MCF 10A (cell line): ENCODE measurements at regions of chr14 and their contacts with region 1.

Region 1: DNA sequence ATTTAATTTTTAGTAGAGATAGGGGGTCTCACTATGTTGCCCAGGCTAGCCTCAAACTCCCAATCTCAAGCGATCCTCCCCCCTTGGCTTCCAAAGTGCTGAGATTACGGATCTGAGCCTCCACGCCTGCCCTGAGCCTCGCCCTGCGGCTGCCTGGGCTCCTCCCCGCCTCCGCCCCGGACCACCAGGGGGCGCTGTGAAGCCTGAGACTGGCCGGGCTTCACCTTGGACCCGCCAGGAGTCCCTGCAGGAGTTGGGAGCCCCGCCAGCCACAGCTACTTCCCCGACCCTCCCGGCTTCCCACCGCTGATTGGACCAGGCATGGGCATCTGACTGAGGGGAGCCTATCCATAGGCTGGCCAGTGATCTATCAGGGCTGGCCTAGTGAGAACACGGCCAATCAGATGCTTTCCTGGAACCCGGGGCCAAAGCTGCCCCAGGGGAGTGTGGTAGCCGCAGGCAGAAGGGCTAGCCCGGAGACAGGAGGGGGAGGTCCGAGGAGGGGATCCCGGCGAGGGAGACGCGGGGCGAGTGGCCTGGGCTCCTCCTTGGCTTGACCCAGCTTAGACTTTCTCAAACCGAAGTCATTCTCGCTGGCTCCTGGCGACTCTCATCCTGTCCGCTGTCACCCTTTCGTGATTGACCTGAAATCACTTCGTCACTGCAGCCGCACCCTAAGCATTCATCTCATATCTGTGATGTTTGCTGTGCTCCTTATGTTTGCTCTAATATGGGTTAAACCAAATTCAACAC is 15.1 kb upstream of the ANKRD9 start:
- DNase-seq: peak; percentile 99
- H3K4me3 Mint-ChIP-seq: peak overlapping the region; percentile 95
- H3K27ac Mint-ChIP-seq: peak overlapping the region; percentile 97
- H3K4me1 Mint-ChIP-seq: peaks cover 25% of the 10 kb centered on the region
- H3K27me3 Mint-ChIP-seq: no peaks in the 10 kb centered on the region
- CTCF ChIP-seq: peak; percentile 92

Region 2: GRCh38 chr14:101823511-101824120 is 701.0 kb before region 1 on chr14:
- CTCF ChIA-PET with region 1: no interaction called
- POLR2A ChIA-PET with region 1: no interaction called
- intact Hi-C with region 1: no loop called
- DNase-seq: no peak
- H3K4me3 Mint-ChIP-seq: no peak overlapping the region
- H3K27ac Mint-ChIP-seq: no peak overlapping the region
- H3K4me1 Mint-ChIP-seq: peaks cover 8% of the 10 kb centered on the region
- H3K27me3 Mint-ChIP-seq: no peaks in the 10 kb centered on the region
- CTCF ChIP-seq: no peak

Region 3: DNA sequence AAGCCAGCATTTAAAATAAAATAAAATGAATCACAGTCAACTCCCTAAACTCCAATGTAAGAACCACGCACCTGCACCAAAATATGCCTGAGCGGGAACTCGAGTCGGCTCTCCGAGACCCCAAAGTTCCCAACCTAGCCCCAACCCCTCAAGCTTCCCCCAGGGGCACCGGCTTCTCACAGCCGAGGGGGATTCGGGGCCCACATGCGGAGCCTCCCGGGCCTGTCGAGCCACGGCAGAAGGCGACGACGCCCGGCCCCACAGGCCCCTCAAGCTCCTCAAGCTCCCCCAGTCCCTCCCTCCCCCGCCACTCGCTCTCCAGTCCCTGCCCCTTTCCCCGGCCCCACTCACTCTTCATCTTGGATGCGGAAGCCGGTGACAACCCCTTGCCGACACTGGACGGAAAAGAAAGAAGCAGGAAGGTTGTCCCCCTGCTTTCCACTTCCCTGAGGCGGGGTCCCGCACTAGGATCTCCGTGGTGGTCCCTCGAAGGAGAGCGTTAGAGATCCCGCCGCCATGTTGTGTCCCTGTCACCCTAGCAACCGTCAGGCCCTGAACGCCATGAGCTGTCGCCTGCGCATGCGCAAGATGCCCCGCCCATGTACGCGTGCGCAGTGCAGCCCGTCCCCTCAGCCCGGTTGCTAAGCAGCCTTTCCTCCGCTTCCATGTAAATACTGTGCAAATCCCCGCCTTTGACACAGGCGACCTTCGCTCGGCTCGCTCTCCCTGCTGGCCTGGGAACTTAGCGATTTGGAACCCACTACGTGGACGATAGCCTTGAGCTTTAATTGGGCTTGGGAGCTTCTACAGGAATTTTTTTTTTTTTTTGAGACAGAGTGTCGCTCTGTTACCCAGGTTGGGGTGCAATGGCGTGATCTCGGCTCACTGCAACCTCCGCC is 219.8 kb before region 1 on chr14 and contains the start of gene MOK:
- CTCF ChIA-PET with region 1: no interaction called
- POLR2A ChIA-PET with region 1: no interaction called
- intact Hi-C with region 1: no loop called
- DNase-seq: peak; percentile 96
- H3K4me3 Mint-ChIP-seq: peak within 1 kb of the TSS; percentile 87
- H3K27ac Mint-ChIP-seq: peak within 1 kb of the TSS; percentile 99
- H3K4me1 Mint-ChIP-seq: peaks cover 7% of the 10 kb centered on the region
- H3K27me3 Mint-ChIP-seq: no peaks in the 10 kb centered on the region
- CTCF ChIP-seq: no peak
- total RNA-seq, gene MOK: 61.7 and 98.9 TPM in 2 replicates

Region 4: DNA sequence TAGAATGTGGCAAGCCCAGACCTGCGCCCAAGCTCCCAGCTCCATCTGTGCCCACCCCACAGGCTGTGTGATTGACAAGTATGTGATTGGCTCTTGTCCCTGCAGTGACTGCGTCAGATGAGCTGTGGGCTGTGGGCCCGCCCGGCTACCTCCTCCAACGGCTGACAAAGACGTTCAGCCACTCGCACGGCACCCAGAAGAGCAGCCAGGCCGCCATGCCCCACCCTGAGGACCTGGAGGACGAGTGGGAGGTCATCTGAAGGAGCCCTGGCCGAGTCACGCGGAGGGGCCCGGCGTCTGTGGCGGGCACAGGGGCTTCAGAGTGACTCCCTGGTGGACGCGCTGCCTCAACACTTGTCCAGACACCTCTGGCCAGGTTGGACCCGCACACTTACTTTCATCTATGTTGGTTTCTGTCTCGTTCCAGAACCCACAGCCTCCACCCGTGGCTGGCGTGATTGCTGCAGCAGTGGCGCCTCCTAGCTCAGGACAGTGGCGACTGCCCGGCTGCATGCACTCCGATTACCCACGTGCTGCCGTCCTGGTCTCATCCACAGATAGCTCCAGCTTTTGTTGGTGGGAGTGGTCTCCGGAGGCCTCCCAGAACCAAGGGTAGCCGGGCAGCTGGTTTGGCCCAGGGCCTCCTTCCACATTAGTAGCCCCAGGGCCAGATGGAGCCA is 26.5 kb before region 1 on chr14:
- CTCF ChIA-PET with region 1: no interaction called
- POLR2A ChIA-PET with region 1: no interaction called
- intact Hi-C with region 1: no loop called
- DNase-seq: no peak
- H3K4me3 Mint-ChIP-seq: no peak overlapping the region
- H3K27ac Mint-ChIP-seq: no peak overlapping the region
- H3K4me1 Mint-ChIP-seq: no peaks in the 10 kb centered on the region
- H3K27me3 Mint-ChIP-seq: no peaks in the 10 kb centered on the region
- CTCF ChIP-seq: no peak

Region 5: GRCh38 chr14:102539580-102540314 is 15.1 kb after region 1 on chr14:
- CTCF ChIA-PET with region 1: interaction called, 5 read pairs
- POLR2A ChIA-PET with region 1: interaction called, 13 read pairs
- intact Hi-C with region 1: no loop called
- DNase-seq: peak; percentile 89
- H3K4me3 Mint-ChIP-seq: no peak overlapping the region
- H3K27ac Mint-ChIP-seq: peak overlapping the region; percentile 35
- H3K4me1 Mint-ChIP-seq: peaks cover 17% of the 10 kb centered on the region
- H3K27me3 Mint-ChIP-seq: no peaks in the 10 kb centered on the region
- CTCF ChIP-seq: no peak

Region 6: DNA sequence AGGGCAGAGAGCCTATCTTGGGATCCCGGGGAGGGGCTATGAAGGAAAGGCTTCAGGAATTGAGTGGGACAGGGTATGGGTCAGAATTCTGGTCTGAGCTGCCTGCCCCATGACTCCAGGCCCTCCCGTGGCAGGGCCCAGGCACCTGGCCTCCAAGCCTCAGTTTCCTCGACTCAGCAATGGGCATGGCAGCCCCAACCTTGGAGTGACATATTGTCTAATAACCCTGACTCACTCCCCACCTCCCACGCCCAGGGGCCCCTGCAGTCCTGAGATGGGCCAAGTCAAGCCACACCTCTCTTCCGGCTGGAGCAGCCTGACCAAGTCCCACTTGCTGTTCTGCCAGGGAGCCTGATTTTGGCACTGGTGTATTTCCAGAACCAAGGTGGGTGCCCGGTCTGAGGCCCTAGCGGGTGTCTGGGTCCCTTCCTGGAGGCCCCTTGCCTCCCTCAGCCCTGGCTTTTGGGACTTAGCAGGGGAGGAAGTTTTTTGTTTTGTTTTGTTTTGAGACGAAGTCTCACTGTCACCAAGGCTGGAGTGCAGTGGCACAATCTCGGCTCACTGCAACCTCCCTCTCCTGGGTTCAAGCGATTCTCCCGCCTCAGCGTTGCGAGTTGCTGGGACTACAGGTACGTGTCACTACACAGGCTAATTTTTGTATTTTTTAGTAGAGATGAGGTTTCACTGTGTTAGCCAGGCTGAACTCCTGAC is 27.5 kb after region 1 on chr14:
- CTCF ChIA-PET with region 1: interaction called, 3 read pairs
- POLR2A ChIA-PET with region 1: interaction called, 16 read pairs
- intact Hi-C with region 1: loop called (anchors 1 kb)
- DNase-seq: peak; percentile 89
- H3K4me3 Mint-ChIP-seq: peak overlapping the region; percentile 69
- H3K27ac Mint-ChIP-seq: peak overlapping the region; percentile 95
- H3K4me1 Mint-ChIP-seq: peaks cover 6% of the 10 kb centered on the region
- H3K27me3 Mint-ChIP-seq: no peaks in the 10 kb centered on the region
- CTCF ChIP-seq: no peak

Region 7: GRCh38 chr14:102557434-102558226 is 33.0 kb after region 1 on chr14:
- CTCF ChIA-PET with region 1: interaction called, 6 read pairs
- POLR2A ChIA-PET with region 1: interaction called, 16 read pairs
- intact Hi-C with region 1: loop called (anchors 1 kb)
- DNase-seq: peak; percentile 69
- H3K4me3 Mint-ChIP-seq: no peak overlapping the region
- H3K27ac Mint-ChIP-seq: peak overlapping the region; percentile 70
- H3K4me1 Mint-ChIP-seq: peaks cover 8% of the 10 kb centered on the region
- H3K27me3 Mint-ChIP-seq: no peaks in the 10 kb centered on the region
- CTCF ChIP-seq: no peak

Region 8: GRCh38 chr14:102568114-102568621 is 43.5 kb after region 1 on chr14:
- CTCF ChIA-PET with region 1: interaction called, 6 read pairs
- POLR2A ChIA-PET with region 1: interaction called, 12 read pairs
- intact Hi-C with region 1: no loop called
- DNase-seq: peak; percentile 87
- H3K4me3 Mint-ChIP-seq: peak overlapping the region; percentile 62
- H3K27ac Mint-ChIP-seq: peak overlapping the region; percentile 93
- H3K4me1 Mint-ChIP-seq: peaks cover 11% of the 10 kb centered on the region
- H3K27me3 Mint-ChIP-seq: no peaks in the 10 kb centered on the region
- CTCF ChIP-seq: no peak

Region 9: GRCh38 chr14:102694530-102695166 is 170.0 kb after region 1 on chr14:
- CTCF ChIA-PET with region 1: interaction called, 9 read pairs
- POLR2A ChIA-PET with region 1: interaction called, 4 read pairs
- intact Hi-C with region 1: loop called (anchors 5 kb)
- DNase-seq: peak; percentile 76
- H3K4me3 Mint-ChIP-seq: no peak overlapping the region
- H3K27ac Mint-ChIP-seq: no peak overlapping the region
- H3K4me1 Mint-ChIP-seq: peaks cover 27% of the 10 kb centered on the region
- H3K27me3 Mint-ChIP-seq: no peaks in the 10 kb centered on the region
- CTCF ChIP-seq: peak; percentile 54